HepG2 (cell line): ENCODE measurements at regions of chr6 and their contacts with region 1.

Region 1: DNA sequence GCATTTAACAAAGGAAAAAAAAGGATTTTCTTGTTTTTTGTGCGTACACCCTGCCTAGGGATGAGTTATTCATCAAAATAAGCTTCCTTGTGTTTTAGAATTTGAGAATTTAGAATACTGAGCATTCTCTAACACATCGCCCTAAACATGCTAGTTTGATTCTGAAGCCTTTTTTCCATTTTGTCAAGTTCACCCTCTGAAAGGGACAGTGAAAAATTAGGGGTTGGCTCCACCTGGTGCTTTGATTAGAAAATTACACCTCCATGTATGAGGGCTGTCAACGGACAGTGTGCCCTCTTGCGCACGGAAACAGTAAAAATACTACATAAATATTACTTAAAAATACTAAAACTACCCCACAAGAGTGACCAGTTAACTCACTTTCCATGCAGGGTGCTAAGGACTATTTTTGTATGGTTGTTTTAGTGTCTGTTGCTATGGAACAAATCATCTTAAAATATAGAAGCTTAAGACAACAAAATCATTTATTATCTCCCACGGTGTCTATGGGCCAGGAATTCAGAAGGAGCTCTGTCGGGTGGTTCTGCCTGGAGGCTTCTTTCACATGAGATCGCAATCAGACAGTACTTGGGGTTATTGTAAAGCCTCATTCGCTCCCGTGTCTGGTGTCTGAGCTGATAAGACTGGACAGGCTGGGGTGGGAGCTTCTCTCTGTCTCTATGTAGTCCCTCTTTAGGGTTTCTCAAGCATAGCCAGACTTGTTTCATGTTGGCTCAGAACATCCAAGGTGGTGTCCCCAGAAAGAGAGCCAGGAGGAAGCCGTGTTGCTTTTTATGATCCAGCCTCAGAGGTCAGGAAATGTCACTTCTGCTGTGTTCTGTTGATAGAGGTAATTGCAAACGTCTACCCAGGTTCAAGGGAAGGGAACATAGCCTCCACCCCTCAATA is 41.1 kb upstream of the TMEM170B start:
- DNase-seq: peak; percentile 91
- ATAC-seq: peak; percentile 91
- H3K4me3 ChIP-seq: no peak overlapping the region
- H3K27ac ChIP-seq: peak overlapping the region; percentile 10
- H3K4me1 ChIP-seq: peaks cover 72% of the 10 kb centered on the region
- H3K27me3 ChIP-seq: no peaks in the 10 kb centered on the region
- CTCF ChIP-seq: peak; percentile 95
- EP300 ChIP-seq: peak in 1 of 2 experiments; percentile 34; a peak in 1 of 4 replicates
- POLR2A ChIP-seq: no peak
- RAD21 ChIP-seq: peak; percentile 98

Region 2: GRCh38 chr6:9711365-9711764 is 1785.0 kb before region 1 on chr6:
- CTCF ChIA-PET with region 1: no interaction called
- POLR2A ChIA-PET with region 1: no interaction called
- in situ Hi-C with region 1: no loop called
- intact Hi-C with region 1: no loop called
- DNase-seq: no peak
- ATAC-seq: no peak
- H3K4me3 ChIP-seq: no peak overlapping the region
- H3K27ac ChIP-seq: no peak overlapping the region
- H3K4me1 ChIP-seq: no peaks in the 10 kb centered on the region
- H3K27me3 ChIP-seq: no peaks in the 10 kb centered on the region
- CTCF ChIP-seq: no peak
- EP300 ChIP-seq: no peak
- POLR2A ChIP-seq: no peak
- RAD21 ChIP-seq: no peak

Region 3: GRCh38 chr6:10954590-10955010 is 541.8 kb before region 1 on chr6:
- CTCF ChIA-PET with region 1: interaction called, 13 read pairs
- POLR2A ChIA-PET with region 1: interaction called, 3 read pairs
- in situ Hi-C with region 1: loop called (anchors 10 kb)
- intact Hi-C with region 1: loop called (anchors 1 kb)
- DNase-seq: peak; percentile 82
- ATAC-seq: peak; percentile 76
- H3K4me3 ChIP-seq: no peak overlapping the region; a peak in 1 of 6 replicates
- H3K27ac ChIP-seq: no peak overlapping the region
- H3K4me1 ChIP-seq: peaks cover 89% of the 10 kb centered on the region
- H3K27me3 ChIP-seq: no peaks in the 10 kb centered on the region
- CTCF ChIP-seq: peak; percentile 99
- EP300 ChIP-seq: peak in 1 of 2 experiments; percentile 19; a peak in 1 of 4 replicates
- POLR2A ChIP-seq: no peak
- RAD21 ChIP-seq: peak; percentile 96

Region 4: DNA sequence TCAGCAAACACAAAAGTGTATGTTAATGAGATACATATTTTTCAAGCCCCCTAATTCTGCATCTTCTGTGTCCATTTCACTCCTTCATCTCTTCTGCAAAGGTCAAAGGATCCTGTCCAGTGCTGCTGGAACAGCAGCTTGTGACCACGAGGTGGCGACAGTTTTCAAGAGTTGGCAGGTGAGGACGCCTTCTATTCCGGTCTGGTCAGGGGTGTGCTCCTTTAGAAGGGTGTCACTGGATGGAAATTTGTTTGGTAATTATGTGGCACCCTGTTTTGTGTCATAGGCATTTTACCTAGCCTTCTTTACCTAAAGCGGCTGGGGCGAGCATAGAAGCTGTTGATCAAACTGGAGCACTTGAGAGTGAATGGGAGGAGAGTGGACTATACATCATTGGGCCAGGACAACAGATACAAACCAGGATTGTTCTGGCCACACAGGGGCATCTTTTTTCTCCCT is 352.0 kb before region 1 on chr6:
- CTCF ChIA-PET with region 1: interaction called, 92 read pairs
- POLR2A ChIA-PET with region 1: no interaction called
- in situ Hi-C with region 1: loop called (anchors 5 kb)
- intact Hi-C with region 1: loop called (anchors 1 kb)
- DNase-seq: peak; percentile 77
- ATAC-seq: peak; percentile 94
- H3K4me3 ChIP-seq: no peak overlapping the region
- H3K27ac ChIP-seq: no peak overlapping the region
- H3K4me1 ChIP-seq: peaks cover 16% of the 10 kb centered on the region
- H3K27me3 ChIP-seq: no peaks in the 10 kb centered on the region
- CTCF ChIP-seq: peak; percentile 99
- EP300 ChIP-seq: no peak
- POLR2A ChIP-seq: no peak
- RAD21 ChIP-seq: peak; percentile 95

Region 5: GRCh38 chr6:11218538-11219399 is 277.6 kb before region 1 on chr6:
- CTCF ChIA-PET with region 1: interaction called, 6 read pairs
- POLR2A ChIA-PET with region 1: no interaction called
- in situ Hi-C with region 1: no loop called
- intact Hi-C with region 1: loop called (anchors 5 kb)
- DNase-seq: peak; percentile 99
- ATAC-seq: peak; percentile 91
- H3K4me3 ChIP-seq: peak overlapping the region; percentile 13 to 54 (median 21)
- H3K27ac ChIP-seq: peak overlapping the region; percentile 85
- H3K4me1 ChIP-seq: peaks cover 100% of the 10 kb centered on the region
- H3K27me3 ChIP-seq: no peaks in the 10 kb centered on the region
- CTCF ChIP-seq: peak; percentile 46
- EP300 ChIP-seq: peak; percentile 86 to 89; a peak in 3 of 4 replicates
- POLR2A ChIP-seq: peak in 1 of 2 experiments; percentile 77; a peak in 3 of 4 replicates
- RAD21 ChIP-seq: peak; percentile 76

Region 6: GRCh38 chr6:11298651-11299420 is 197.6 kb before region 1 on chr6:
- CTCF ChIA-PET with region 1: no interaction called
- POLR2A ChIA-PET with region 1: no interaction called
- in situ Hi-C with region 1: no loop called
- intact Hi-C with region 1: loop called (anchors 5 kb)
- DNase-seq: peak; percentile 98
- ATAC-seq: peak; percentile 98
- H3K4me3 ChIP-seq: peak overlapping the region in 2 of 3 experiments; percentile 15 to 61; a peak in 2 of 6 replicates
- H3K27ac ChIP-seq: peak overlapping the region; percentile 90
- H3K4me1 ChIP-seq: peaks cover 44% of the 10 kb centered on the region
- H3K27me3 ChIP-seq: no peaks in the 10 kb centered on the region
- CTCF ChIP-seq: peak; percentile 17; the same call in 1 of the 2 replicates
- EP300 ChIP-seq: peak; percentile 92 to 94
- POLR2A ChIP-seq: peak; percentile 9 to 49; a peak in 1 of 4 replicates
- RAD21 ChIP-seq: peak; percentile 42

Region 7: GRCh38 chr6:11392778-11393507 is 103.5 kb before region 1 on chr6:
- CTCF ChIA-PET with region 1: no interaction called
- POLR2A ChIA-PET with region 1: interaction called, 3 read pairs
- in situ Hi-C with region 1: no loop called
- intact Hi-C with region 1: loop called (anchors 2 kb)
- DNase-seq: peak; percentile 100
- ATAC-seq: peak; percentile 85
- H3K4me3 ChIP-seq: peak overlapping the region in 1 of 3 experiments; percentile 39; a peak in 2 of 6 replicates
- H3K27ac ChIP-seq: peak overlapping the region; percentile 98
- H3K4me1 ChIP-seq: peaks cover 97% of the 10 kb centered on the region
- H3K27me3 ChIP-seq: no peaks in the 10 kb centered on the region
- CTCF ChIP-seq: peak; percentile 17; the same call in 1 of the 2 replicates
- EP300 ChIP-seq: peak; percentile 89 to 100
- POLR2A ChIP-seq: peak; percentile 63 to 66; a peak in 3 of 4 replicates
- RAD21 ChIP-seq: no peak

Region 8: GRCh38 chr6:11414176-11414963 is 82.0 kb before region 1 on chr6:
- CTCF ChIA-PET with region 1: no interaction called
- POLR2A ChIA-PET with region 1: no interaction called
- in situ Hi-C with region 1: no loop called
- intact Hi-C with region 1: no loop called
- DNase-seq: peak; percentile 78
- ATAC-seq: peak; percentile 81
- H3K4me3 ChIP-seq: no peak overlapping the region
- H3K27ac ChIP-seq: peak overlapping the region; percentile 44
- H3K4me1 ChIP-seq: peaks cover 58% of the 10 kb centered on the region
- H3K27me3 ChIP-seq: no peaks in the 10 kb centered on the region
- CTCF ChIP-seq: no peak
- EP300 ChIP-seq: 0 out of 4 replicates have a peak, but pooled peaks of 1 of the 2 experiments have one; percentile 5
- POLR2A ChIP-seq: no peak
- RAD21 ChIP-seq: no peak

Region 9: GRCh38 chr6:11467364-11467763 is 29.0 kb before region 1 on chr6:
- CTCF ChIA-PET with region 1: no interaction called
- POLR2A ChIA-PET with region 1: no interaction called
- in situ Hi-C with region 1: no loop called
- intact Hi-C with region 1: no loop called
- DNase-seq: no peak
- ATAC-seq: no peak
- H3K4me3 ChIP-seq: no peak overlapping the region
- H3K27ac ChIP-seq: no peak overlapping the region
- H3K4me1 ChIP-seq: peaks cover 29% of the 10 kb centered on the region
- H3K27me3 ChIP-seq: no peaks in the 10 kb centered on the region
- CTCF ChIP-seq: no peak
- EP300 ChIP-seq: no peak
- POLR2A ChIP-seq: no peak
- RAD21 ChIP-seq: no peak

Region 10: DNA sequence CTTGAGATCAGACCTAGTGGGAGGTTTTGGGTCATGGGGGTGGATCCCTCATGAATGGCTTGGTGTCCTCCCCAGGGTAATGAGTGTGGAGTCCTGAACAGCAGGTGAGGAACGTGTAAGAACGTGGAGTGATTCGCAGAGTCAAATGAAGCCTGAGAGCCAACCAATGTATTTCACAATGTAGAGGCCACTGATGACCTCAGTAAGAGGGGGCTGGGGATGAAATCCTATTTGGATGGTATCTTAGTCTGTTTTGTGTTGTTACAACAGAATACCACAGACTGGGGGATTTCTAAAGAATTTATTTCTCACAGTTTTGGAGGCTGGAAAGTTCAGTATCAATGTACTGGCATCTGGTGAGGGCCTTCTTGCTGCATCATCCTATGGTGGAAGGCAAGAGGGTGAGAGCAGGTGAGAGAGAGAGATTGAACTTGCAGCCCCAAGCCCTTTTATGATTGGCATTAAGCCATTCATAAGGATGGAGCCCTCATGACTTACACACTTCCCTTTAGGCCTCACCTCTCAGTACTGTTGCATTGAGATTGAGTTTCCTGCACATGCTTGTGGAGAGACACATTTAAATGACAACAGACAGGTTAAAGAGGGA is 468.4 kb after region 1 on chr6:
- CTCF ChIA-PET with region 1: no interaction called
- POLR2A ChIA-PET with region 1: no interaction called
- in situ Hi-C with region 1: no loop called
- intact Hi-C with region 1: no loop called
- DNase-seq: no peak
- ATAC-seq: no peak
- H3K4me3 ChIP-seq: no peak overlapping the region
- H3K27ac ChIP-seq: no peak overlapping the region
- H3K4me1 ChIP-seq: peaks cover 10% of the 10 kb centered on the region
- H3K27me3 ChIP-seq: no peaks in the 10 kb centered on the region
- CTCF ChIP-seq: no peak
- EP300 ChIP-seq: no peak
- POLR2A ChIP-seq: no peak
- RAD21 ChIP-seq: no peak